Activated naive CD8-positive, alpha-beta T cell treated with anti-CD3 and anti-CD28 coated beads, Interleukin-2, amount 10 ng/mL, durations not matched to agents 7 days and 5 days (primary cell): ENCODE measurements at regions of chr5 and their contacts with region 1.

Region 1: GRCh38 chr5:140244525-140245025 is 58.3 kb downstream of the PFDN1 start:
- DNase-seq: peak; percentile 84
- ATAC-seq: peak; percentile 51
- H3K4me3 Mint-ChIP-seq: peak overlapping the region; percentile 28
- H3K27ac Mint-ChIP-seq: peak overlapping the region; percentile 87
- H3K4me1 Mint-ChIP-seq: peaks cover 35% of the 10 kb centered on the region
- H3K27me3 Mint-ChIP-seq: no peaks in the 10 kb centered on the region

Region 2: GRCh38 chr5:140346348-140347101 is 102.0 kb after region 1 on chr5 and contains the start of gene HBEGF:
- POLR2A ChIA-PET with region 1: interaction called, 31 read pairs
- DNase-seq: peak; percentile 75
- ATAC-seq: peak; percentile 54
- H3K4me3 Mint-ChIP-seq: peak within 1 kb of the TSS; percentile 95
- H3K27ac Mint-ChIP-seq: peak within 1 kb of the TSS; percentile 84
- H3K4me1 Mint-ChIP-seq: peaks cover 58% of the 10 kb centered on the region
- H3K27me3 Mint-ChIP-seq: peaks cover 10% of the 10 kb centered on the region
- total RNA-seq, gene HBEGF: 12.8 TPM

Region 3: GRCh38 chr5:140351609-140352334 is 107.2 kb after region 1 on chr5:
- POLR2A ChIA-PET with region 1: interaction called, 31 read pairs
- DNase-seq: no peak
- ATAC-seq: peak; percentile 78
- H3K4me3 Mint-ChIP-seq: no peak overlapping the region
- H3K27ac Mint-ChIP-seq: no peak overlapping the region
- H3K4me1 Mint-ChIP-seq: peaks cover 24% of the 10 kb centered on the region
- H3K27me3 Mint-ChIP-seq: peaks cover 13% of the 10 kb centered on the region